GM12878 (cell line): ENCODE measurements at regions of chr4 and their contacts with region 1.

Region 1: GRCh38 chr4:8176547-8177399 is 18.2 kb upstream of the ABLIM2 start:
- DNase-seq: no peak
- ATAC-seq: peak; percentile 91
- H3K4me3 ChIP-seq: no peak overlapping the region
- H3K27ac ChIP-seq: no peak overlapping the region
- H3K4me1 ChIP-seq: peaks cover 18% of the 10 kb centered on the region
- H3K27me3 ChIP-seq: no peaks in the 10 kb centered on the region
- CTCF ChIP-seq: peak; percentile 93 to 96 (median 94)
- EP300 ChIP-seq: no peak
- POLR2A ChIP-seq: no peak
- RAD21 ChIP-seq: peak; percentile 93

Region 2: DNA sequence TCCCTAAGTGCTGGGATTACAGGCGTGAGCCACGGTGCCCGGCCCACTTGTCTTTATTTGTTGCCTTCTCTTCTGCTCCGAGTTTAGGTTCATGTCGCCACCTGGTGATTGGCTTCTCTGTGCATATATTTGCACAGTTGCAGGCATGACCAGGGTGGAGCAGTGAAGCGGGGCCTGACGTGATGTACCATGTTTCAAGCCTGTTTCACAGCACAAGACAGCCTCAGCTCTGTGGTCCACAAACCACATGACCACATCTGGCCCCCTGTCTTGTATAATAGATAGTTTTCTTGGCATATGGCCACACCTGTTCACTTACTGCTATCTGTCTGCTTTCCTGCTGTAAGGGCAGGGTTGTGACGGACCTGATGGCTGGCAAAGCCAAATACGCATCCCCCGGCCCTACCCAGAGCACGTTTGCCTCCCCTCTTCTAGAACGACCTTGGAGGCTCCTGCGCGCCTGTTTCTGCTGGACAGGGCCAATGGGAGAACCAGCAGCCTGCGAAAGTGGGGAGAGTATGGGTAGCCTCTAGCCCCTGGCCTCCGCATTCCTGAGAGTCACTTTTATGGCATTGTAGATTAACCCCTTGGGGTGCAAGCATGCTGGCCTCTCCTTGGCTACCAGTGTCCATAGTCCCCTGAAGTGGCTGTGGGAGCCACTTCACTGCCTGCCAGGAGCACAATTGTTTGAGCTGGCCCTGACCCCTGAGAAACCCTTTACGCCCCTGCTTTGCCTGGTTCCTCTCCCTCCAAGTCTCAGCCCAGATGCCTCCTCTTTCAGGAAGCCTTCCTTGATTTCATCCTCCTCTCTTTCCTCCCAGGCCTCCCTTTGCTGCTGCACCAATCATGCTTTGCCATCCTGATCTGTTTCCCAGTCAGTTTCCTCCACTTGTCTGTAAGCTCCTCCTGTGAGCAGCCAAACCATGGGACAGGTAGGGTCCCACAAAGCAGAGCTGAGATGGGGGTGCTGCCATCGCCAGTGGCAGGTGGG is 16.3 kb after region 1 on chr4:
- CTCF ChIA-PET with region 1: interaction called, 96 read pairs
- POLR2A ChIA-PET with region 1: interaction called, 7 read pairs
- RAD21 ChIA-PET with region 1: interaction called, 76 read pairs
- SMC1A ChIA-PET with region 1: interaction called, 37 read pairs
- in situ Hi-C with region 1: no loop called
- intact Hi-C with region 1: loop called (anchors 1 kb)
- DNase-seq: peak; percentile 78
- ATAC-seq: peak; percentile 93
- H3K4me3 ChIP-seq: no peak overlapping the region
- H3K27ac ChIP-seq: no peak overlapping the region
- H3K4me1 ChIP-seq: peaks cover 16% of the 10 kb centered on the region
- H3K27me3 ChIP-seq: no peaks in the 10 kb centered on the region
- CTCF ChIP-seq: peak; percentile 37 to 72 (median 48); a peak in 5 of 6 replicates
- EP300 ChIP-seq: peak; percentile 35 to 51; a peak in 2 of 4 replicates
- POLR2A ChIP-seq: no peak
- RAD21 ChIP-seq: peak; percentile 79

Region 3: GRCh38 chr4:8221476-8221875 is 44.7 kb after region 1 on chr4:
- CTCF ChIA-PET with region 1: interaction called, 17 read pairs
- POLR2A ChIA-PET with region 1: no interaction called
- RAD21 ChIA-PET with region 1: interaction called, 11 read pairs
- SMC1A ChIA-PET with region 1: interaction called, 9 read pairs
- in situ Hi-C with region 1: no loop called
- intact Hi-C with region 1: no loop called
- DNase-seq: peak; percentile 46
- ATAC-seq: peak; percentile 91
- H3K4me3 ChIP-seq: no peak overlapping the region
- H3K27ac ChIP-seq: peak overlapping the region; percentile 67; the same call in 1 of the 2 replicates
- H3K4me1 ChIP-seq: peaks cover 11% of the 10 kb centered on the region
- H3K27me3 ChIP-seq: no peaks in the 10 kb centered on the region
- CTCF ChIP-seq: no peak
- EP300 ChIP-seq: peak; percentile 79 to 87; a peak in 3 of 4 replicates
- POLR2A ChIP-seq: no peak
- RAD21 ChIP-seq: no peak

Region 4: GRCh38 chr4:8241895-8242696 is 65.3 kb after region 1 on chr4:
- CTCF ChIA-PET with region 1: interaction called, 16 read pairs
- POLR2A ChIA-PET with region 1: no interaction called
- RAD21 ChIA-PET with region 1: interaction called, 19 read pairs
- SMC1A ChIA-PET with region 1: interaction called, 9 read pairs
- in situ Hi-C with region 1: no loop called
- intact Hi-C with region 1: loop called (anchors 2 kb)
- DNase-seq: no peak
- ATAC-seq: peak; percentile 85
- H3K4me3 ChIP-seq: no peak overlapping the region
- H3K27ac ChIP-seq: no peak overlapping the region
- H3K4me1 ChIP-seq: peaks cover 3% of the 10 kb centered on the region
- H3K27me3 ChIP-seq: no peaks in the 10 kb centered on the region
- CTCF ChIP-seq: peak; percentile 91 to 96 (median 92)
- EP300 ChIP-seq: no peak
- POLR2A ChIP-seq: 0 out of 2 replicates have a peak, but pooled peaks have one; percentile 20
- RAD21 ChIP-seq: peak; percentile 77

Region 5: DNA sequence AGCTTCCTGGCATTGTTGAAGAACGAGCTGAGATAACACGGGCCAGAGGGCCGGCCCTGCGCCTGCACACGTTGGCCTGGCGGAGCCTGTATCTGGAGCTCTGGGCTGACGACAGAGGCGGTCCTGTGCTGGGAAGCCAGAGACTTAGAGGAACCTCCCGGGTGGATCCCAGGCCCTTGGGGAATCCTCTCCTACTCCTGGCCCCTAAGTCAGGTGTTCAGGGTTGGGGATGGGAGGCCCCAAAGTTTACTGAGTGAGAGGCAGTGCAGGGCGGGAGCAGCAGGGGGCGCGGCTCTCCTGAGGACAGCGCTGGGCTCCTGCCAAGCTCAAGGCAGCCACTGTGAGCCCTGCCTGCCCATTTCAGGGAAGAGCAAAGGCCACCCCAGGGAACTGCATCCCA is 90.3 kb after region 1 on chr4:
- CTCF ChIA-PET with region 1: interaction called, 3 read pairs
- POLR2A ChIA-PET with region 1: no interaction called
- RAD21 ChIA-PET with region 1: interaction called, 16 read pairs
- SMC1A ChIA-PET with region 1: no interaction called
- in situ Hi-C with region 1: no loop called
- intact Hi-C with region 1: no loop called
- DNase-seq: no peak
- ATAC-seq: peak; percentile 92
- H3K4me3 ChIP-seq: no peak overlapping the region
- H3K27ac ChIP-seq: no peak overlapping the region
- H3K4me1 ChIP-seq: no peaks in the 10 kb centered on the region
- H3K27me3 ChIP-seq: peaks cover 2 to 6% of the 10 kb centered on the region in 2 experiments; a peak in 3 of 4 replicates
- CTCF ChIP-seq: peak; percentile 53 to 74 (median 67)
- EP300 ChIP-seq: no peak
- POLR2A ChIP-seq: no peak
- RAD21 ChIP-seq: peak; percentile 49

Region 6: DNA sequence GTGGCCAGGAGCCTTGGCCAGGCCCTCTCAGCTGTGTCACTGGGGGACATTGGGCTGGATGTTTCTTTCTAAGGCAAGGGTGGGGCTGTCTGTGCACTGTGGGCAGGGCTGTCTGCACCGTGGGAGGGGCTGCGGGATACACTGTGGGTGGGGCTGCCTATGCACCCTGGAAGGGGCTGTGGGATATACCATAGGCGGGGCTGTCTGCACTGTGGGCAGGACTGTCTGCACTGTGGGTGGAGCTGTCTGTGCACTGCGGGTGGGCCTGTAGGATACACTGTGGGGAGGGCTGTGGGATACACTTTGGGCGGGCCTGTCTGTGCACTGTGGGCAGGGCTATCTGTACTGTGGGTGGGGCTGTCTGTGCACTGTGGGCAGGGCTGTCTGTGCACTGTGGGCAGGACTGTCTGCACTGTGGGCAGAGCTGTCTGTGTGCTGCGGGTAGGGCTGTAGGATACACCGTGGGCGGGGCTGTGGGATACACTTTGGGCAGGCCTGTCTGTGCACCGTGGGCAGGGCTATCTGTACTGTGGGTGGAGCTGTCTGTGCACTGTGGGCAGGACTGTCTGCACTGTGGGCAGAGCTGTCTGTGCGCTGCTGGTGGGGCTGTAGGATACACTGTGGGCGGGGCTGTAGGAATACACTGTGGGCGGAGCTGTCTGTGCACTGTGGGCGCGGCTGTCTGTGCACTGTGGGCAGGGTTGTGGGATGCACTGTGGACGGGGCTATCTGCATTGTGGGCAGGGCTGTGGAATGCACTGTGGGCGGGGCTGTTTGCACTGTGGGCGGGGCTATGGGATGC is 232.7 kb after region 1 on chr4:
- CTCF ChIA-PET with region 1: interaction called, 15 read pairs
- POLR2A ChIA-PET with region 1: no interaction called
- RAD21 ChIA-PET with region 1: interaction called, 11 read pairs
- SMC1A ChIA-PET with region 1: interaction called, 5 read pairs
- in situ Hi-C with region 1: no loop called
- intact Hi-C with region 1: no loop called
- DNase-seq: no peak
- ATAC-seq: peak; percentile 80
- H3K4me3 ChIP-seq: no peak overlapping the region
- H3K27ac ChIP-seq: no peak overlapping the region
- H3K4me1 ChIP-seq: no peaks in the 10 kb centered on the region
- H3K27me3 ChIP-seq: no peaks in the 10 kb centered on the region
- CTCF ChIP-seq: no peak
- EP300 ChIP-seq: no peak
- POLR2A ChIP-seq: no peak
- RAD21 ChIP-seq: no peak